ENCODE measurements at regions of chr1 and their contacts with region 1.

Region 1: DNA sequence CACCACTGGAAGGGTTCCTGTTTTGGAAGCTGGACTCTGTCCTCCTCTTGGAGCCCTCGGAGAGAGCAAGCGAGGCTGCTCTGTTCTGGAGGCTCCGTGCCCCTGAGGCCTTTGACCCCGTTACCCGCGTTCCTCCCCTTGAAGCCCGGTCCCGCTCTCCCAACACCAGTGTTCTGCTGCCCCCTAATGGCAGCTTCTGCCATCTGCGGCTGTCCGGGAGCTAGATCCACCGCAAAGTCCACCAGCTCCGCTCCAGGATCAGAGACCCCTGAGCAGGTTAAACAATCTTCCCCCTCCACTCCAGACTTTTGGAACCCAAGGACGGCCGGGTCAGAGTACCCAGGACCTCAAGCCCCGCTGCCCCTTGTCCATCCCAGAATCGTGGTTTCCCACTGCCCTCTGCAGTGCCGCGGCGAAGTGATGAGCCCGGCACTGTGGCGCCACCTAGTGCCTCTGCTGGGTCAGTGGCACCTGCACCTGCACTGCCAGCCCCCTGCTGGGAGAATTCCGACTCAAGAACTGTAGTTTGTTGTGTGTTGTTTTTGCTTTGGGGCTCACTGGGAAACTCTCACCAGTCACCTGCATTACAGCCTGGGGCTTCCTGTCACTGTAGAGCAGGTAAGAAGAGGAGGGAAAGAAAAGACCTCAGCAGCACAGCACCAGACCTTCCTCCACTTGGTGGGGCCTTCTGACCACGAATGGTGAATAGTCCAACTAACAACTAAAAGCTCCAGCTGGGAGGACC is 63.5 kb upstream of the NFASC start:
- DNase-seq: peak; percentile 64 to 97
- H3K4me3 ChIP-seq: peak overlapping the region; percentile 19 to 85 (median 70); a peak in 7 of 8 replicates
- H3K27ac ChIP-seq: no peak overlapping the region
- H3K4me1 ChIP-seq: peaks cover 0 to 4% (median 0%) of the 10 kb centered on the region in 4 experiments; a peak in 2 of 7 replicates
- H3K27me3 ChIP-seq: no peaks in the 10 kb centered on the region
- CTCF ChIP-seq: peak; percentile 73 to 99 (median 92)
- EP300 ChIP-seq: peak in 1 of 2 experiments; percentile 49; a peak in 1 of 3 replicates
- POLR2A ChIP-seq: no peak
- RAD21 ChIP-seq: peak; percentile 84 to 88

Region 2: GRCh38 chr1:204615881-204616280 is 191.2 kb before region 1 on chr1:
- CTCF ChIA-PET with region 1: interaction called, 125 read pairs
- POLR2A ChIA-PET with region 1: no interaction called
- DNase-seq: no peak
- H3K4me3 ChIP-seq: no peak overlapping the region
- H3K27ac ChIP-seq: no peak overlapping the region
- H3K4me1 ChIP-seq: peaks cover 0 to 4% (median 1%) of the 10 kb centered on the region in 4 experiments; a peak in 3 of 7 replicates
- H3K27me3 ChIP-seq: no peaks in the 10 kb centered on the region; a peak in 1 of 7 replicates
- CTCF ChIP-seq: no peak
- EP300 ChIP-seq: no peak
- POLR2A ChIP-seq: no peak
- RAD21 ChIP-seq: no peak

Region 3: GRCh38 chr1:204685236-204686006 is 121.7 kb before region 1 on chr1 and contains the start of gene LRRN2:
- CTCF ChIA-PET with region 1: interaction called, 44 read pairs
- POLR2A ChIA-PET with region 1: no interaction called
- DNase-seq: peak in 1 of 2 experiments; percentile 66
- H3K4me3 ChIP-seq: peak within 1 kb of the TSS; percentile 43 to 66 (median 60)
- H3K27ac ChIP-seq: no peak within 1 kb of the TSS
- H3K4me1 ChIP-seq: peaks cover 0 to 12% (median 7%) of the 10 kb centered on the region in 4 experiments; a peak in 6 of 7 replicates
- H3K27me3 ChIP-seq: peaks cover 13 to 50% (median 44%) of the 10 kb centered on the region in 4 experiments
- CTCF ChIP-seq: no peak; a peak in 1 of 4 replicates
- EP300 ChIP-seq: no peak
- POLR2A ChIP-seq: no peak
- RAD21 ChIP-seq: no peak
- total RNA-seq, gene LRRN2: 2.3 and 2.5 TPM in 2 replicates

Region 4: GRCh38 chr1:204723131-204723787 is 83.9 kb before region 1 on chr1:
- CTCF ChIA-PET with region 1: interaction called, 31 read pairs
- POLR2A ChIA-PET with region 1: no interaction called
- DNase-seq: peak in 1 of 2 experiments; percentile 23
- H3K4me3 ChIP-seq: no peak overlapping the region
- H3K27ac ChIP-seq: no peak overlapping the region
- H3K4me1 ChIP-seq: peaks cover 0 to 4% (median 1%) of the 10 kb centered on the region in 4 experiments; a peak in 2 of 7 replicates
- H3K27me3 ChIP-seq: peaks cover 0 to 2% (median 0%) of the 10 kb centered on the region in 4 experiments; a peak in 3 of 7 replicates
- CTCF ChIP-seq: no peak
- EP300 ChIP-seq: no peak
- POLR2A ChIP-seq: no peak
- RAD21 ChIP-seq: no peak

Region 5: DNA sequence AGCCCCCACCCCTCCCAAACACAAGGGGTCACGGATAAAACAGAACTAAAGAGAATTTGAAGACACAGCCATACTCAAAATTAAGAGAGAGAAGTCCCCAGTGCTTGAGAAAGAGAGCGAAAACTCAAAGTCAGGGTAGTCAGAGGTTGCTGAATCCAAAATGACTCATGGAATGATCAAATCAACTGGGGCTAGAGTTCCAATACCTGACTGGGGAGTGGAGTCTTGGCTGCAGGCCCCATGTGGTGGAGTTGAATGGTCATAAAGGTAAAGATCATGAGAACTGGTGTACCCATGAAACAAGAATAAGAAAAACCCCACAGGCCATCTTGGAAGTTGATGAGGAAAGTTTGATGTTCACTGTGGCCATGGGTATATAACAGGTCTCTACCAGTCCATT is 37.1 kb before region 1 on chr1:
- CTCF ChIA-PET with region 1: interaction called, 18 read pairs
- POLR2A ChIA-PET with region 1: no interaction called
- DNase-seq: no peak
- H3K4me3 ChIP-seq: no peak overlapping the region
- H3K27ac ChIP-seq: no peak overlapping the region
- H3K4me1 ChIP-seq: peaks cover 0 to 2% (median 2%) of the 10 kb centered on the region in 4 experiments; a peak in 2 of 7 replicates
- H3K27me3 ChIP-seq: no peaks in the 10 kb centered on the region
- CTCF ChIP-seq: no peak
- EP300 ChIP-seq: no peak
- POLR2A ChIP-seq: no peak
- RAD21 ChIP-seq: no peak

Region 6: DNA sequence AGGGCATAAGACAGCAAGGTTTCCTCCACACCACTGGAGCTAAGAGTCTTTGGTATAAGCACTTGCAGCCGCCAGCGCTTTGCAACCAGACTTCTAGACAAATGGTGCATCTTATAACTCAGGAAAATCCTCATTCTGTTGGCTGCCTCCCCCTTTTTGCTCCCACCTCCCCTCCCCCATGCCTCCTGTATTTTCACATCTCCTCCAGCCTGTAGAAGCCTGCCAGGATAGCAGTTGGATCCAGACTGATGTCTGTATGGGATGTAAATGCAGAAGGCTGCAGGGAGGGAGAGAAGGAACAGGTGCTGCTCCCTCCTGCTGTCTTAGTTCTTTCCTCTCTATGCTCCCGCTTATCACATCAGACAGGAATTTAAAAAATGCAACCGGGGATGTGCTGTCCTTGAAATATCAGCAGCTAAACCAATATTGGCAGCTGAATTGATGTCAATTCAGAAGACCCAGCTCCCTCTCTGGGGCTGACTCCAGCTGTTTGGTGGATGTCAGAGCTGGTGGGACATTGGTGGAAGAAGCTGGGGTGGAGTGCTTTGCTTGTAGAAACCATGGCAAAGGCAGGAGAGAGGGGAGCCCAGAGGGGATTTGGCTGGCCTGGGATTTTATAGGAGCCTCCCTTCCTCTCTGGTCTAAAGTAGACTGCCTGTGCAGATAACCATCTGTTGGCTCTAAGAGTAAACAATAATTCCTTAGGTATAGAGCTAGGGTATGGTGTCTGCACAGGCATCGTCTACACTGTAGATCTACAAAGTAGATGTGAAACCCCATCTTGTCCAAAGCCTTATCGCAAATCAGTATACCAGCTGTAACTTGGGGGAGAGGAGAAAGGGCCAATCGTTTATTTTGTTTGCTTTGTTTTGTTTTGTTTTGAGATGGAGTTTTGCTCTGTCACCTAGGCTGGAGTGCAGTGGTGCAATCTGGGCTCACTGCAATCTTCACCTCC is 117.2 kb after region 1 on chr1:
- CTCF ChIA-PET with region 1: interaction called, 30 read pairs
- POLR2A ChIA-PET with region 1: no interaction called
- DNase-seq: peak in 1 of 2 experiments; percentile 79
- H3K4me3 ChIP-seq: peak overlapping the region in 1 of 4 experiments; percentile 27; a peak in 2 of 8 replicates
- H3K27ac ChIP-seq: no peak overlapping the region
- H3K4me1 ChIP-seq: peaks cover 25 to 46% (median 41%) of the 10 kb centered on the region in 4 experiments
- H3K27me3 ChIP-seq: no peaks in the 10 kb centered on the region
- CTCF ChIP-seq: no peak
- EP300 ChIP-seq: peak in 1 of 2 experiments; percentile 92; a peak in 1 of 3 replicates
- POLR2A ChIP-seq: no peak
- RAD21 ChIP-seq: no peak

Region 7: GRCh38 chr1:204968951-204969350 is 161.8 kb after region 1 on chr1:
- CTCF ChIA-PET with region 1: interaction called, 41 read pairs
- POLR2A ChIA-PET with region 1: interaction called, 3 read pairs
- DNase-seq: no peak
- H3K4me3 ChIP-seq: no peak overlapping the region
- H3K27ac ChIP-seq: no peak overlapping the region
- H3K4me1 ChIP-seq: no peaks in the 10 kb centered on the region
- H3K27me3 ChIP-seq: no peaks in the 10 kb centered on the region
- CTCF ChIP-seq: no peak
- EP300 ChIP-seq: no peak
- POLR2A ChIP-seq: no peak
- RAD21 ChIP-seq: no peak

Region 8: GRCh38 chr1:204997591-204998355 is 190.7 kb after region 1 on chr1:
- CTCF ChIA-PET with region 1: no interaction called
- POLR2A ChIA-PET with region 1: no interaction called
- DNase-seq: no peak
- H3K4me3 ChIP-seq: no peak overlapping the region
- H3K27ac ChIP-seq: no peak overlapping the region
- H3K4me1 ChIP-seq: peaks cover 0 to 5% (median 1%) of the 10 kb centered on the region in 4 experiments; a peak in 3 of 7 replicates
- H3K27me3 ChIP-seq: no peaks in the 10 kb centered on the region; a peak in 1 of 7 replicates
- CTCF ChIP-seq: no peak
- EP300 ChIP-seq: no peak
- POLR2A ChIP-seq: no peak
- RAD21 ChIP-seq: no peak

Region 9: GRCh38 chr1:205013683-205014367 is 206.7 kb after region 1 on chr1:
- CTCF ChIA-PET with region 1: no interaction called
- POLR2A ChIA-PET with region 1: no interaction called
- DNase-seq: no peak
- H3K4me3 ChIP-seq: no peak overlapping the region
- H3K27ac ChIP-seq: no peak overlapping the region
- H3K4me1 ChIP-seq: peaks cover 0 to 21% (median 7%) of the 10 kb centered on the region in 4 experiments; a peak in 5 of 7 replicates
- H3K27me3 ChIP-seq: no peaks in the 10 kb centered on the region
- CTCF ChIP-seq: no peak
- EP300 ChIP-seq: no peak
- POLR2A ChIP-seq: no peak
- RAD21 ChIP-seq: no peak